Activated B cell treated with CpG ODN at 0.5 μM for 24 hours (primary cell): ENCODE measurements at regions of chr6 and their contacts with region 1.

Region 1: GRCh38 chr6:170295510-170296422 is 4.9 kb upstream of the DLL1 start:
- DNase-seq: peak; percentile 61
- ATAC-seq: peak; percentile 69
- H3K4me3 Mint-ChIP-seq: peak overlapping the region; percentile 83
- H3K27ac Mint-ChIP-seq: no peak overlapping the region
- H3K4me1 Mint-ChIP-seq: peaks cover 40% of the 10 kb centered on the region
- H3K27me3 Mint-ChIP-seq: peaks cover 50% of the 10 kb centered on the region
- CTCF ChIP-seq: no peak

Region 2: GRCh38 chr6:168979254-168979653 is 1316.5 kb before region 1 on chr6:
- CTCF ChIA-PET with region 1: no interaction called
- POLR2A ChIA-PET with region 1: no interaction called
- intact Hi-C with region 1: no loop called
- DNase-seq: no peak
- ATAC-seq: no peak
- H3K4me3 Mint-ChIP-seq: no peak overlapping the region
- H3K27ac Mint-ChIP-seq: no peak overlapping the region
- H3K4me1 Mint-ChIP-seq: no peaks in the 10 kb centered on the region
- H3K27me3 Mint-ChIP-seq: peaks cover 2% of the 10 kb centered on the region
- CTCF ChIP-seq: no peak

Region 3: GRCh38 chr6:169212897-169213813 is 1082.6 kb before region 1 on chr6:
- CTCF ChIA-PET with region 1: no interaction called
- POLR2A ChIA-PET with region 1: no interaction called
- intact Hi-C with region 1: loop called (anchors 5 kb)
- DNase-seq: peak; percentile 82
- ATAC-seq: peak; percentile 98
- H3K4me3 Mint-ChIP-seq: peak overlapping the region; percentile 69
- H3K27ac Mint-ChIP-seq: peak overlapping the region; percentile 68
- H3K4me1 Mint-ChIP-seq: peaks cover 2% of the 10 kb centered on the region
- H3K27me3 Mint-ChIP-seq: no peaks in the 10 kb centered on the region
- CTCF ChIP-seq: no peak

Region 4: DNA sequence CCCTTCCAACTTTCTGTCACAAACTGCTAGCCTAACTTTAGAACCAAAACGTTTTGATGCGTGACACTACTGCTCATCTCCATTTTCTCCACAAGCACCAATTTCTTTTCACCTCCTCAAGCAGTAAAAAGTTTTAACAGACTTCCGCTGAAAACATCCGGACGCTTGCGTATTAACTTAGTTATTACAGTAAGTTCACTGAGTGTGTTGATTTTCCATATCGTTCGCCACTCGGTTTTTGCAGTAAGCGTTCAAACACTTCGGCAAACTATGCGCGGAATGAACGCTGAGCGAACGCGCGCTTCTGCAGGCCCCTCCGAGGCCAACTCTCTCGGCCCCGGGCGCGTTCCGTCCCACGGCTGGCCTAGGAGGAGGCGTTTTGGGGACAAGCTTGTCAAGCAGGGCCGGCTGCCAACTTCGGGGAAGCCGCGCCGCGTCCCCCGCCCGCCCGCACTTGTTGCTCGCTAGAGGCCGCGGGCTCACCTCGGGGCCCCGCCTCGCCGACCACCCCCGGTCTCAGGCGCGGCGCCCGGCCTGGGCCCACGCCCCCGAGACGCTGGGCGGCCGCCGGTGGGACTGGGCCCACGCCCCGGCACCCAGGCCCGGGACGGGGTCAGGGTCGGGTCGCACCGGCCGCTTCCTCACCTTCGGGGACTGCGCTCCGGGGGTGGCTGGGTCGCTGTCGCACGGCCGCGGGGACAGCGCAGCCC is 572.4 kb before region 1 on chr6:
- CTCF ChIA-PET with region 1: no interaction called
- POLR2A ChIA-PET with region 1: interaction called, 7 read pairs
- intact Hi-C with region 1: loop called (anchors 5 kb)
- DNase-seq: peak; percentile 76
- ATAC-seq: peak; percentile 45
- H3K4me3 Mint-ChIP-seq: peak overlapping the region; percentile 82
- H3K27ac Mint-ChIP-seq: peak overlapping the region; percentile 89
- H3K4me1 Mint-ChIP-seq: peaks cover 30% of the 10 kb centered on the region
- H3K27me3 Mint-ChIP-seq: no peaks in the 10 kb centered on the region
- CTCF ChIP-seq: no peak

Region 5: DNA sequence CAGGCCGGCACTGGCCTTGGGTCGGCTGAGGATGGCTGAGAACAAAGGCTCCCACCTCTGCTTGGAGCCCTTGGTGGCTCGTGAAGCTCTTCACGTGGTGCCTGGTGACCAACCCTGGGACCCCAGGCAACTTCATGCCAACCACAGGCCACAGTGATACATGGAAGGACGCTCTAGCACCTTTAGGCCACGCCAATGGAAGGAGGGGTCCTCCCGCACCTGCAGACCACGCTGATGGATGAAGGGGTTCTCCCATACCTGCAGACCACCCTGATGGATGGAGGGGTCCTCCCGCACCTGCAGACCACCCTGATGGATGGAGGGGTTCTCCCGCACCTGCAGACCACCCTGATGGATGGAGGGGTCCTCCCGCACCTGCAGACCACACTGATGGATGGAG is 481.8 kb before region 1 on chr6:
- CTCF ChIA-PET with region 1: no interaction called
- POLR2A ChIA-PET with region 1: no interaction called
- intact Hi-C with region 1: no loop called
- DNase-seq: no peak
- ATAC-seq: no peak
- H3K4me3 Mint-ChIP-seq: no peak overlapping the region
- H3K27ac Mint-ChIP-seq: no peak overlapping the region
- H3K4me1 Mint-ChIP-seq: peaks cover 2% of the 10 kb centered on the region
- H3K27me3 Mint-ChIP-seq: peaks cover 3% of the 10 kb centered on the region
- CTCF ChIP-seq: no peak

Region 6: DNA sequence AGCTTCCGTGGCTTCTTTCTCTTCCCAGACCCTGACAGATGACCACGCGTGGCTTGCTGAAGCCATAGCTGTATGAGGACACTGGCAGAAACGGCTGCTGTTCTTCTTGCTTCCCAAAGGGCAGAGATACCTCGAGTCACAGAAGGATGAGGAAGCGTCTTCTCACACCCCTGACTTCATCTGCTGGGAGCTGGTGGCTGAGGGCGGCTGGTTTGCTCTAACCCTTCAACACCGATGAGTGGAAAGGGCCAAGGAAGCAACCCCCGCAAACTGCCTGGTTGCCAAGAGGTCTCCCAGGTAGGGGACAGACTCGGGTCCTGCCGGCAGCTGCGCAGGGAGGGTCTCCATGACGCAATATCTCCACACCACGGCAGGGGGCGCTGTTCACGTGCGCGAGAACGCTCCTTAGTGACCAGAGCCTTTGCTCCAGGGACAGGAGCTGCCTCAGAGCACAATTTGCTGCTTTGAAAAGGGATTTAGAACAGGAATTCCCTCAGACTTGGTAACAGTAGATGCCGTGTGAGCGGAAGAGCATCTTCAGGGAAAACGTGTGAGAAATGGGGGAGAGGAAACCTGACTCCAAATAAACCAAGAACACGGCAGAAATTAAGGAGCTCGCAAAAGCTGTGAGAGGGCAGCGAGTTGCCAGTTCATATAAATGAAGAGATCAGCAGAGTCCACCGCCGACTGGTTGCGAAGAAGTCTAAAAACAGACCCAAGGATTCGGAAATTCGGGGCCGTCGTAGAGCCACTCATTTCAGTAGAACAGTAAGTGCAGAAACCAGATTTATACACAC is 464.1 kb before region 1 on chr6:
- CTCF ChIA-PET with region 1: interaction called, 6 read pairs
- POLR2A ChIA-PET with region 1: no interaction called
- intact Hi-C with region 1: loop called (anchors 2 kb)
- DNase-seq: peak; percentile 57
- ATAC-seq: peak; percentile 64
- H3K4me3 Mint-ChIP-seq: no peak overlapping the region
- H3K27ac Mint-ChIP-seq: no peak overlapping the region
- H3K4me1 Mint-ChIP-seq: no peaks in the 10 kb centered on the region
- H3K27me3 Mint-ChIP-seq: peaks cover 29% of the 10 kb centered on the region
- CTCF ChIP-seq: no peak

Region 7: DNA sequence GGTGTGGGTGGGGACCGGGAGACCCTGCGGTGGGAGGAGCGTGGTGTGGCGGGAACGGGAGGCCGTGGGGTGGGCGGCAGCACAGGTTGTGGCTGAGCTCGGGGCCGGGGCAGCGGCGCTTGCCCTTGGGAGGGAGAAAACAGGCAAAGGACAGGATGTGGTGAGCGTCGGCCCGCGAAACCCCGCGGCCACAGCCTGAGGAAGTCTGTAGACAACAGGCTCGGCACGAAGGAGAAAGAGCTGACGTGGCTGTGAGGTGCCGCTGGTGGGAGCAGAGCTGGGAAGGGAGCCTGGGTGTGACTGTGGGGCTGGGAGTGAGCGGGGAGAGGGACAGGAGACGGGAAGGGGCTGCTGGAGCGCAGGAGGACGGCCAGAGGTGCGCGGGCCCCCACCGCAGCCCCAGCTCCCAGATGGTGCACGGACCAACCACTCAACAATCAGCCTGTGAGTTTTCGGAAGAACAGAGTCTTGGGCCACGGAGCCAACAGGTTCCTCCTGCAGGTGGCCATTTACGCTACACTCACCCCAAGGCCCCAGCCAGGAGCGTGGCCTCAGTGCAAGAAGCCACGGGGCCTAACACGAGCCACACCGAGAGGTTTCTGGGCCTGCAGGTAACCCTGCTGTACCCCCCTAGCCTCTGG is 207.7 kb before region 1 on chr6:
- CTCF ChIA-PET with region 1: no interaction called
- POLR2A ChIA-PET with region 1: interaction called, 4 read pairs
- intact Hi-C with region 1: loop called (anchors 5 kb)
- DNase-seq: peak; percentile 44
- ATAC-seq: peak; percentile 57
- H3K4me3 Mint-ChIP-seq: peak overlapping the region; percentile 82
- H3K27ac Mint-ChIP-seq: peak overlapping the region; percentile 85
- H3K4me1 Mint-ChIP-seq: peaks cover 30% of the 10 kb centered on the region
- H3K27me3 Mint-ChIP-seq: no peaks in the 10 kb centered on the region
- CTCF ChIP-seq: no peak

Region 8: DNA sequence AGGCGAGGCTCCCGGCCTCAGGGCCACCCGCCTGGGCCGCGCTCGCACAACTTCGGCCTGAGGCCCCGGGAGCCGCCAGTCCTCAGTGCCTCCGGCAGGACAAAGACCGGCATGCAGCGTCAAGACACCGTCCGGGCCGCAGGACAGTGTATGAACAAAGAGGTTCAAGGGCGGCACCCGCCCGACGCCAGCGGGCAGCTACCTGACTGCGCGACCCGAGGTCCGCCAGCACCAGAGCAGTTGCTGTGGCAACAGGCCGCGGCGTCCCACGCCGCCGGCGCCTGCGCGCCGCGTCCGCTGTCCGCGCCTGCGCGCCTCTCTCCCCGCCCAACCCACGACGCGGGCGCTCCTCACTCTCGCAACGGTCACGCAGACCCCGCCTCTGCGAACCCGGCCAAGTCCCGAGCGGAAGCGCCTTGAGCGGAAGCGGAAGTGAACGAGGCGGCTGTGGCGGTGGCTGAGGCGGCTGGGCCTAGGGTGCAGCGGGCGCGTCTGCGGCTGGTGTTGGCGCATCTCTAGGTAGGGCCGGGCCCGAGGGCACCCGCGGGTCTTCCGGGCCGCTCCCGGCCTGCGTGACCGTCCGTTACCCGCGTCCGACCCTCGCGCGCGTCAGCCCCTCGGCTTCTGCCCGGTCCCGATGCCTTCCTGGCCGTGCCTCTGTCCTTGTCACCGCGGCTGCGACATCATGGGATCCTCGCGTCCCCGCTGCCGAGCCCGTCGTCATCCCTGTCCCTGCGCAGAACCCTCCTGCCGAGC is 10.7 kb after region 1 on chr6 and contains the start of gene FAM120B:
- CTCF ChIA-PET with region 1: no interaction called
- POLR2A ChIA-PET with region 1: interaction called, 8 read pairs
- intact Hi-C with region 1: loop called (anchors 1 kb)
- DNase-seq: peak; percentile 93
- ATAC-seq: peak; percentile 95
- H3K4me3 Mint-ChIP-seq: peak within 1 kb of the TSS; percentile 98
- H3K27ac Mint-ChIP-seq: peak within 1 kb of the TSS; percentile 91
- H3K4me1 Mint-ChIP-seq: peaks cover 47% of the 10 kb centered on the region
- H3K27me3 Mint-ChIP-seq: peaks cover 13% of the 10 kb centered on the region
- CTCF ChIP-seq: no peak
- total RNA-seq, gene FAM120B: 32.2 and 35.1 TPM in 2 replicates